Caco-2 (cell line): ENCODE measurements at regions of chr2 and their contacts with region 1.

Region 1: DNA sequence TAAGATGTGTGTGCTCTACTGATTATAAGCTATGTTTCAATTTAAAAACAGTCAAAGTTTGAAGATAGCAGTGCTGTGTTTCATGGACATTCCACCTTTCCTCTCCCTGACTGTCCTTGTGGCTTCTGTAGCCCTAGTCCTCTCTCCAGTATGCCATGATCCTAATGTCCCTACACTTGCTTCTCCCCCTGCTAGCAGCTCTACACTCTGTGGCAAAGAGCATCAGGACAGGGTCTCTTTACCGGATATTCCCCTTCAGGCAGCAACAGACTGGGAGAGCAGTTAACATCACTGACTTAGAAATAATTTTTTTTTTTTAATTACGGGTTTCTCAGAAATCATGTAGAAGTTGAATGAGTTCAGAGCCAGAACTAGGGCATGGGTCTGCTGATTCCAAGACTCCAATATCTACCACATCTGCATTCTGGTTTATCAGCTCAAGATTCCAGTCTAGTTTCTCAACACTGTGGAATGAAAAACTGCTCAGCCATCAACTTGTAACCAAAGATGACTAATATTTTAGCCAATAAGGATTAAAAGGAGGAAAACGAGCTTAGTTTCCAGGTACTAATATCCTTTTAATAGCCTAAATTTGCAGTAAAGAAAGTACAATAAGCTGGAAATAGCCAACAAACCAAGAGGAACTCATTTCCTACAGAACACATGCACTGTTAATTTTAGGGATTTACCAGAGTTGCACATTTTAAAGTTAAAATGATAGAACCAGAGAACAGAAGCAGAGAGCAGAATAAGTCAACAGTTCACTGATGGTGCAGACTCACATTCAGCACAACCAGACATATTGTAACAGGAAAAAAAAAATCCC is 45.2 kb downstream of the TMEM131 start:
- DNase-seq: no peak
- H3K4me3 ChIP-seq: no peak overlapping the region
- H3K4me3 Mint-ChIP-seq: peak overlapping the region; percentile 25
- H3K27ac Mint-ChIP-seq: peak overlapping the region; percentile 81
- H3K4me1 ChIP-seq: peaks cover 31% of the 10 kb centered on the region
- H3K4me1 Mint-ChIP-seq: peaks cover 16% of the 10 kb centered on the region
- H3K27me3 ChIP-seq: no peaks in the 10 kb centered on the region
- H3K27me3 Mint-ChIP-seq: no peaks in the 10 kb centered on the region
- CTCF ChIP-seq: no peak

Region 2: DNA sequence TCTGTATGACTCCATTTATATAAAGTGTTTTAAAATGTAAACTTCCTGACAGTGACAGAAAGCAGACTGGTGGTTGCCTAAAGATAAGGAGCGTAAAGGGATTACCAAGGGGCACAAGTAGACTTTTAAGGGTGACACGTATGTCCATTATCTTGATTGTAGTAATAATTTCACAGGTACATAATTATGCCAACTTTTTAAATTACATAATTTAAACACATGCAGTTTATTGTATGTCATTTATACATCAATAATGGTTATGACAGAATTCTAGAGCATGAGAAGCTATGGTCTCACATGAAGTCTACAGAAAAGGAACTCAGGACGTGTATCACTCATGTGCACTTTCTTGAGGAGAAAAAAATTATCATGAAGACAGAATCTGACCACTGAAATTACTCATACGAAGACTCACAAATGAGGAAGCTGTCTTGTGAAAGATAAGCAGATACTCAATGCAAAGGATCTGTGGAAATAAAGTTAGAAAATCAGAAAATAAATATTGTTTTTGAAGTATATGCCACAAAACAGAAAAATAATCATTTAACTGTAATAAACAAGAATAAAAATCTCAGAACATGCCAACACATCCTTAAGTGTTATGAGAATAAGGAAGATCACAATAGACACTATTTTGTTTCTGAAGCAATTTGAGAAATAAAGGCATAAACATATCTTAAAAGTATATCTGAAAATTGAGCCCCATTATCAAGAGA is 39.2 kb before region 1 on chr2:
- CTCF ChIA-PET with region 1: no interaction called
- POLR2A ChIA-PET with region 1: no interaction called
- intact Hi-C with region 1: loop called (anchors 5 kb)
- DNase-seq: no peak
- H3K4me3 ChIP-seq: no peak overlapping the region
- H3K4me3 Mint-ChIP-seq: no peak overlapping the region
- H3K27ac Mint-ChIP-seq: peak overlapping the region; percentile 58
- H3K4me1 ChIP-seq: peaks cover 10% of the 10 kb centered on the region
- H3K4me1 Mint-ChIP-seq: peaks cover 19% of the 10 kb centered on the region
- H3K27me3 ChIP-seq: no peaks in the 10 kb centered on the region
- H3K27me3 Mint-ChIP-seq: no peaks in the 10 kb centered on the region
- CTCF ChIP-seq: no peak

Region 3: GRCh38 chr2:97935719-97936161 is 14.8 kb before region 1 on chr2:
- CTCF ChIA-PET with region 1: interaction called, 3 read pairs
- POLR2A ChIA-PET with region 1: no interaction called
- intact Hi-C with region 1: loop called (anchors 2 kb)
- DNase-seq: peak; percentile 42 to 45
- H3K4me3 ChIP-seq: no peak overlapping the region
- H3K4me3 Mint-ChIP-seq: peak overlapping the region; percentile 62
- H3K27ac Mint-ChIP-seq: peak overlapping the region; percentile 62
- H3K4me1 ChIP-seq: 0 out of 2 replicates have a peak, but pooled peaks cover 16% of the 10 kb centered on the region
- H3K4me1 Mint-ChIP-seq: peaks cover 7% of the 10 kb centered on the region
- H3K27me3 ChIP-seq: no peaks in the 10 kb centered on the region
- H3K27me3 Mint-ChIP-seq: no peaks in the 10 kb centered on the region
- CTCF ChIP-seq: no peak